ENCODE measurements at regions of chr19 and their contacts with region 1.

Region 1: GRCh38 chr19:27894906-27895754 is 1317.8 kb downstream of the UQCRFS1 start:
- DNase-seq: peak in 1 of 42 donors; percentile 16

Region 2: DNA sequence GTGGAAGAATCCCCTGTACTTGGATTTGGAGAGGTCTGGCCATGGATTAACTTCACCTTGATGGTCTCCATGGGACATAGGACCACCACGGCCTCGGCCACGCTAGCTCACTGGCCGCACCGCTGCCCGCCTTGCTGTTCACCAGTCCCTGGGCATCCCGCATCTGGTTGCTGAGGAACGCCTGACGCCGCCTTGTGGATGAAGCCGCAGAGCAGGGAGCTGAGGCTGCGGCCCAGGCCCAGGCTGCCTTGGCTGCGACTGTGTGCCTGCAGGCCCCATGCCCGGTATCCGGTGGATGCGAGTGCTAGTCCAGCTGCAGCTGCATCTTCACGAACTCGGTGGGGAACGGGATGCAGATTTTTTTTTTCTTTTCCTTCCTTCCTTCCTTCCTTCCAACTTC is 89.3 kb before region 1 on chr19:
- intact Hi-C with region 1: loop called (anchors 10 kb)
- DNase-seq: no peak